Activated CD4-positive, alpha-beta memory T cell treated with anti-CD3 and anti-CD28 coated beads for 36 hours (primary cell): ENCODE measurements at regions of chrX and their contacts with region 1.

Region 1: GRCh38 chrX:47560831-47561652 is at the start of gene ARAF:
- DNase-seq: peak; percentile 97
- H3K4me3 Mint-ChIP-seq: peak within 1 kb of the TSS; percentile 80
- H3K27ac Mint-ChIP-seq: peak within 1 kb of the TSS; percentile 93
- H3K4me1 Mint-ChIP-seq: peaks cover 41% of the 10 kb centered on the region
- H3K27me3 Mint-ChIP-seq: no peaks in the 10 kb centered on the region
- total RNA-seq, gene ARAF: 66.4 to 68.6 TPM

Region 2: GRCh38 chrX:47351706-47352105 is 209.3 kb before region 1 on chrX:
- CTCF ChIA-PET with region 1: no interaction called
- POLR2A ChIA-PET with region 1: no interaction called
- intact Hi-C with region 1: no loop called
- DNase-seq: no peak
- H3K4me3 Mint-ChIP-seq: no peak overlapping the region
- H3K27ac Mint-ChIP-seq: no peak overlapping the region
- H3K4me1 Mint-ChIP-seq: no peaks in the 10 kb centered on the region
- H3K27me3 Mint-ChIP-seq: no peaks in the 10 kb centered on the region

Region 3: DNA sequence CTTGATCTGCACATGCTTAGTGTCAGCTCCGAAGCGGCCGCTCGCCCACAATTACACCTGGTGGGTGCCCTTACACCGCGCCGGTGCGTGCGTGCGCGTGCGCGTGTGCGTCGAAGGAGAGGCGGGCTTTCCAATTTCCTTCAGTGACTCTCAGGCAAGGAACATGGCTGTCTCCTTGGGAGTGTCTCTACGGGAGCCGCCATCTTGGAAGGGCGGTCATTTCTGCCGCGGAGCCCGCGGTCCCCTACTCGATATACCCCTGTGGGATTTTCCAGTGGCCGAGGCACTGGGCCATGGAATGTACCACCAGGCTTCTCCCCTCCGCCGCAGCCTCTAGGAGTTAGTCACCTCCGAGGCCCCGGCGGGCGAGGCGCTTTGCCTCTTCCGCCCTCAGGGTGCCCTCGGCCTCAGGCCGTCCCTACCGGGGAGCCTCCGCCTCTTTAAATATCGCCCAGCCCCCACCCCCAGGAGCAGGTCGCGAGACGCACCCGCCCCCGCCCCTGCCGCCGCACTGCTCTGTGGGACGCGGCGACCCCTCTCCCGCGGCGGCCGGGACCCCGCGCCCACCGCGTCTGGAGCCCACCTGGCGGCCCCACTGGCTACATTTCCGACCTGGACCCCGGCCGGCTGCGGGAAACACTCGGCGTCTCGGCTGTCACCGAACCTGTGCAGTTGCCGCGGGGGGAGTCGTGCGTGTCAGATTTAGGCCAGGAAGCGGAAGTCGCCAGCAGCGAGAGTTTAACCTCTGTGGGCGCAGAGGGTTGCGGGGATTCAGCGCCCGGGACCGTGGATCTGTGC is 78.3 kb before region 1 on chrX and contains the start of gene ZNF41:
- CTCF ChIA-PET with region 1: no interaction called
- POLR2A ChIA-PET with region 1: no interaction called
- intact Hi-C with region 1: loop called (anchors 2 kb)
- DNase-seq: peak; percentile 80
- H3K4me3 Mint-ChIP-seq: peak within 1 kb of the TSS; percentile 86
- H3K27ac Mint-ChIP-seq: peak within 1 kb of the TSS; percentile 95
- H3K4me1 Mint-ChIP-seq: peaks cover 29% of the 10 kb centered on the region
- H3K27me3 Mint-ChIP-seq: no peaks in the 10 kb centered on the region
- total RNA-seq, gene ZNF41: 8.4 to 8.7 TPM

Region 4: GRCh38 chrX:47523297-47523696 is 37.7 kb before region 1 on chrX:
- CTCF ChIA-PET with region 1: no interaction called
- POLR2A ChIA-PET with region 1: no interaction called
- intact Hi-C with region 1: no loop called
- DNase-seq: peak; percentile 86
- H3K4me3 Mint-ChIP-seq: peak overlapping the region; percentile 60
- H3K27ac Mint-ChIP-seq: no peak overlapping the region
- H3K4me1 Mint-ChIP-seq: no peaks in the 10 kb centered on the region
- H3K27me3 Mint-ChIP-seq: no peaks in the 10 kb centered on the region

Region 5: GRCh38 chrX:47628980-47629379 is 67.9 kb after region 1 on chrX:
- CTCF ChIA-PET with region 1: no interaction called
- POLR2A ChIA-PET with region 1: no interaction called
- intact Hi-C with region 1: loop called (anchors 5 kb)
- DNase-seq: peak; percentile 36
- H3K4me3 Mint-ChIP-seq: peak overlapping the region; percentile 41
- H3K27ac Mint-ChIP-seq: peak overlapping the region; percentile 79
- H3K4me1 Mint-ChIP-seq: peaks cover 19% of the 10 kb centered on the region
- H3K27me3 Mint-ChIP-seq: no peaks in the 10 kb centered on the region

Region 6: DNA sequence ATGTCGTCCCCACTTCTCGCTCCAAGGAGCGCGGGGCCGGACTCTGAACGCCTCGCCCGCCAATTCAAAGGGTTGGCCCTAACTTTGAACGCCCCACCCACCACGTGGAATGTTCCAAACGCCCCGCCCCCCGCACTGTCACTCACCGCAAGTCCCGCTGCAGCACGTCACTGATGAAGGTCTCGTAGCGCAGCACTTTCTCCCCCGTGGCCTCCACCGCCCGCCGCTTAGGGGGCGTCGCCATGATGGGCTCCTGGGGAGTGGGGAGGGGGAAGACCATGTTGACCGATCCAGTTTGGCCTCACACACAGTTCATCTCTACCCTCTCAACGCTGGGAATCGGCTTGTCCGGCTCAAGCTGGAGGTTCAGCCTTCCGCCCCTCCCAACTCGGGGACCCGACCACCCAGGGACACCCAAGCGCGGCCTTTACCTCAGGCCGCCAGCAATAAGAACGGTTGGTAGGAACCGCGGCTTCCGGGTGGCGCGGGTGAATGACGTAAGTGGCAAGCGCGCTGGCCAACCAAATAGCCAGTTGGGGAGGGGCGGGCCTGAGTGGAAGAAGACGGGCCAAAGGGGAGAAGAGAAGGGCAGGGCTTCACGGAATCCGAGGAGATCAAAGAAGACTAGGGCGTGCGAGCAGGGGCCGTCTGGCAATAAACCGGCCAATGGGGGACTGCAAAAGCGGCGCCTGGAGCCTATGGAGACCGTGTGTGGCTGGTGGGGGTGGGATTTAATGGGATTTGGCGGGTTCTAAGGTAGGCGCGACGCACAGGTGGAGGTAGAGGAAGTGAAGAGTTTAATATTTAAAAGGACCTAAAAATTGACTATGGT is 97.9 kb after region 1 on chrX and contains the start of gene UXT:
- CTCF ChIA-PET with region 1: no interaction called
- POLR2A ChIA-PET with region 1: no interaction called
- intact Hi-C with region 1: loop called (anchors 2 kb)
- DNase-seq: peak; percentile 96
- H3K4me3 Mint-ChIP-seq: peak within 1 kb of the TSS; percentile 87
- H3K27ac Mint-ChIP-seq: peak within 1 kb of the TSS; percentile 98
- H3K4me1 Mint-ChIP-seq: peaks cover 48% of the 10 kb centered on the region
- H3K27me3 Mint-ChIP-seq: no peaks in the 10 kb centered on the region
- total RNA-seq, gene UXT: 198 to 210 TPM

Region 7: DNA sequence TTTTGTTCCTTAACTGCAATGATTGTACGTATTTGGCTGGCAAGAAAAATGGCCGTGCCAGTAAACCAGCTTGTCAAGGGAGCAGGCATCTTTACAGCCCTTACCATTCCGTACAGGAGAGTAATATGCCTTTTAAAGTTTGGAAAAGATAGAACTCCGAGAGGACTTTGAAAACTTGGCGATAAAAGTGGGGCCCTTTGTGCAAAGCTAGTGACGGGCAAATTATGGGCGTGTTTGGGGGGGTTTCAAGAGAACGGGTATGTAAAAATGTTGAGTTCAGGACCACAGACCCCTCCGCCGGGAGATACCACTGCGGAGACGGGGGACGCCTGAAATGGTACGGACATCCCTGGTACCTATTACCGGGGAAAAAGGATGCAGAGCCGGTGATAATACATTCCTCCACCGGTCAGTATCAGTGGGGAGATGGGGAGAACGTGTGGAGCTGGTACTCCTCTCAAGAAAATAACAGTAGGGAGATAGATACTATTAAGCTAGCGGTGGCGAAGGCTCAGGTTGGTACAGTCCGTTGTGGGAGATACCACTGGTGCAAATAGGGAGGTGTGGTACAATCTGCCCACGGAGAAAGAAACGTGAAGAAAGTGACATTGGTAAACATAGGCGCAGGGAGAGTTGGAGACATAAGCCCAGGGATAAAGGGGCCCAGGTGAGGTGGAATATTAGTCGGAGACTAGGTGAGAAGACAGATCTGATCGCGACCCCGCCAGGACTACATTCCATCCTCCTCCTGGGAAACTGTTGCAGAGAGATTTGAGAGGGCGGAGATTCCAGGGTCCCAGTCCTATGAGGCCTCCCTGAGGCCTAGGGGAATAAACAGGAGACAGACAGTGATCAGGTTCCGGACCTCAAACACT is 460.2 kb after region 1 on chrX:
- CTCF ChIA-PET with region 1: no interaction called
- POLR2A ChIA-PET with region 1: no interaction called
- intact Hi-C with region 1: loop called (anchors 5 kb)
- DNase-seq: peak; percentile 79
- H3K4me3 Mint-ChIP-seq: peak overlapping the region; percentile 88
- H3K27ac Mint-ChIP-seq: peak overlapping the region; percentile 95
- H3K4me1 Mint-ChIP-seq: peaks cover 8% of the 10 kb centered on the region
- H3K27me3 Mint-ChIP-seq: no peaks in the 10 kb centered on the region